Heart right ventricle (tissue), 16 donors: ENCODE measurements at regions of chr13 and their contacts with region 1.

Region 1: GRCh38 chr13:46057256-46058015 is 4.9 kb upstream of the ZC3H13 start:
- DNase-seq: no peak
- ATAC-seq: no peak
- H3K4me3 ChIP-seq: no peak overlapping the region
- H3K27ac ChIP-seq: no peak overlapping the region
- H3K4me1 ChIP-seq: peaks cover 0 to 11% (median 10%) of the 10 kb centered on the region in 9 donors
- H3K27me3 ChIP-seq: peaks cover 0 to 9% (median 0%) of the 10 kb centered on the region in 7 donors
- CTCF ChIP-seq: no peak

Region 2: DNA sequence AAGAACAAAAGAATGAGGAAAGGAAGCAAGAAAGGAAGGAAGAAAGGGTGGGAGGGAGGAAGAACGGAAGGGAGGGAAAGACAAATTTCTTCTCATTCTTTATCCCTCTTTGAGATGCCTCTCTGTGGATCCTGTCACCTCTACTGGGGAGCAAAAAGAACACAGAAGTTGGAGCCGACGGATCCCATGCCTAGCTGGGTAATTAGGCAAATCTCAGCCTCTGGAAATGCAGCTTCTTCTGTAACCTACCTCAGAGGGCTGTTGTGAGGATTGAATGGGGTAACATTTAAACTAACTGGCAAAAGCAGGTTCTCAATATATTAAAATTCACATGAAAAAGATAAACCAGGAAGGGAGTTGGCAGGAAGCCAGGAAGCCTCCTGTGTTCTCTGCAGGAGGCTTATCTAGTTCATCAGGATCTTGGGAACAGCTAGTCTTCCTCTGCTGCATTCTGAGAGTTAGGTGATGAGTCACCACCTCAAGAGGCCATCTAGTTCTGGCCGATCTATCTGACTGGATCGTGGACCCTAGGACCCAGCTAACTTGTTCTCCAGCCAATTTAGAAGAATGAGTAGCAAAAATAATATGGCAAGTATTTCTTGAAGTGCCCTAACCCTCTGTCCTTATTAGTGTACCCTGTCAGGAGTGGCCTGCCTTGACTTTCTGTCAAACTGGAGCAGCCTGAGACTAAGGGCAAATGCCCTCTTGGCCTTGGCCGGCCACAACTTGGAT is 62.6 kb after region 1 on chr13:
- intact Hi-C with region 1: loop called in 1 of 10 experiments (anchors 5 kb)
- DNase-seq: no peak
- ATAC-seq: peak in 3 of 8 donors; percentile 42 to 70 (median 63)
- H3K4me3 ChIP-seq: no peak overlapping the region
- H3K27ac ChIP-seq: no peak overlapping the region
- H3K4me1 ChIP-seq: peaks cover 0 to 9% (median 0%) of the 10 kb centered on the region in 9 donors
- H3K27me3 ChIP-seq: no peaks in the 10 kb centered on the region
- CTCF ChIP-seq: no peak